PC-3 (cell line): ENCODE measurements at regions of chr2 and their contacts with region 1.

Region 1: GRCh38 chr2:201754717-201755415 is 25.9 kb downstream of the ALS2 start:
- DNase-seq: peak; percentile 72
- ATAC-seq: peak; percentile 96
- H3K4me3 ChIP-seq: no peak overlapping the region
- H3K27ac ChIP-seq: no peak overlapping the region
- H3K4me1 ChIP-seq: peaks cover 10% of the 10 kb centered on the region
- H3K27me3 ChIP-seq: no peaks in the 10 kb centered on the region
- CTCF ChIP-seq: no peak

Region 2: DNA sequence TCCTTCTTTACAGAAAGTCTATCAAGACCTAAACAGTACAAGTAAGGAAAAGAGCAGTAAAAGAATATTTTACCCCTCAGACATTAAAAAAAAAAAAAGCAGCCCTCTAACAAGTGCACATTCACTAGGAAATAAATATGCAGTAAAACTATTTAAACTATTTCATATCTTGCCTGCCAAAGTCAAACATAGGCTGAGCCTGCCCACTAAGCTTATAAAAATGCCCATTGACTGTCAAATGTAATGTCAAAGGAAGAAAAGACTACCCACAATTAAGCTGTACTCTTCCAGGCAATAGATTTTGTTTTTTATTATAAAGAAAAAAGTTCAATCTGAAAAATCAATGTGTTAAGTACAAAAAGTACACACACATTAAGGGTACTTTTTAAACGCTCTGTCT is 14.1 kb after region 1 on chr2:
- CTCF ChIA-PET with region 1: interaction called, 5 read pairs
- POLR2A ChIA-PET with region 1: no interaction called
- intact Hi-C with region 1: loop called (anchors 2 kb)
- DNase-seq: peak; percentile 36
- ATAC-seq: peak; percentile 83
- H3K4me3 ChIP-seq: no peak overlapping the region
- H3K27ac ChIP-seq: no peak overlapping the region
- H3K4me1 ChIP-seq: peaks cover 25% of the 10 kb centered on the region
- H3K27me3 ChIP-seq: no peaks in the 10 kb centered on the region
- CTCF ChIP-seq: no peak

Region 3: DNA sequence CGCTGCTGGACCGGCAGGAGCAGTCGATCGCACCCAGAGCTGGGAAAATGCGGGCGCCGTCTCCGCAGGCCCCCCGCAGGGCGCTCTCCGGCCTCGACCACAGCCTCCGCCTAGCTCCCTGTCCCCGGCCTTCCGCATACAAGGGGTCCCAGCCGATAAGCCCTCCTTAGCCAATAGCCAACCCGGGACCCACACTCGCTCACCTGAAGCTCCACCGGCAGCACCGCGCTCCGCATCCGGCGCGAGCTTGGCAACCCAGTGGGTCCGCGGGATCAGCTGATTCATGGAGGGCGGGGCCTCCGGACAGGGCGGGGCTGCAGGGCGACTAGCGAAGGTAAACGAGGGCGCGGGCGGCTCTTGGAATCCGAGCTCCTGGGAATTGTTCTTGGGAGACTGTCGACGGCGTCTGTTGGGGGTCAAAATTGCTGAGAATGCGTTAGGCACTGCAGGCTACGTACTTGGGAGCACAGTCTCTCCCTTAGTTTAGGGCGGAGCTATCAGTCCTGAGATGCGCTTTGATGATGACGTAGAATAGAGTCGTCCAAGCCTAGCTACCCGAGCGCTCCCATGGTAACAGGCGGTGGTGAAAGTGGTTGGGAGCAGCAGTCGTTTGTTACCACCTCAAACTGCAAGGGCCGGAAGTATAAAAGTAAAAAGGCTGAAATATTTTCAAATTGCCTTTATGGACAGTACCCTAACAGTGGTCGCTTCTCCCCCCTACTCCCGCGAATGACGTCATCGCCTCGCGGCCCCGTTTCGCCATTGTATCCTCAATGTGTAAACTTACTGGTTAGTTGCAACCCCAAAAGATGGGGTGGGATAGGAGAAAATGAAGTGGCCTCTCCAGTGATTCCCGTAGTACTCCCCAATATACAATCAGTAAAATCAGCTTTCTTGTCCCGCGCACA is 26.1 kb after region 1 on chr2 and contains the start of gene ALS2:
- CTCF ChIA-PET with region 1: no interaction called
- POLR2A ChIA-PET with region 1: no interaction called
- intact Hi-C with region 1: no loop called
- DNase-seq: peak; percentile 97
- ATAC-seq: peak; percentile 87
- H3K4me3 ChIP-seq: peak within 1 kb of the TSS; percentile 97
- H3K27ac ChIP-seq: peak within 1 kb of the TSS; percentile 59
- H3K4me1 ChIP-seq: peaks cover 44% of the 10 kb centered on the region
- H3K27me3 ChIP-seq: no peaks in the 10 kb centered on the region
- CTCF ChIP-seq: no peak
- total RNA-seq, gene ALS2: 20.4 and 23.8 TPM in 2 replicates

Region 4: DNA sequence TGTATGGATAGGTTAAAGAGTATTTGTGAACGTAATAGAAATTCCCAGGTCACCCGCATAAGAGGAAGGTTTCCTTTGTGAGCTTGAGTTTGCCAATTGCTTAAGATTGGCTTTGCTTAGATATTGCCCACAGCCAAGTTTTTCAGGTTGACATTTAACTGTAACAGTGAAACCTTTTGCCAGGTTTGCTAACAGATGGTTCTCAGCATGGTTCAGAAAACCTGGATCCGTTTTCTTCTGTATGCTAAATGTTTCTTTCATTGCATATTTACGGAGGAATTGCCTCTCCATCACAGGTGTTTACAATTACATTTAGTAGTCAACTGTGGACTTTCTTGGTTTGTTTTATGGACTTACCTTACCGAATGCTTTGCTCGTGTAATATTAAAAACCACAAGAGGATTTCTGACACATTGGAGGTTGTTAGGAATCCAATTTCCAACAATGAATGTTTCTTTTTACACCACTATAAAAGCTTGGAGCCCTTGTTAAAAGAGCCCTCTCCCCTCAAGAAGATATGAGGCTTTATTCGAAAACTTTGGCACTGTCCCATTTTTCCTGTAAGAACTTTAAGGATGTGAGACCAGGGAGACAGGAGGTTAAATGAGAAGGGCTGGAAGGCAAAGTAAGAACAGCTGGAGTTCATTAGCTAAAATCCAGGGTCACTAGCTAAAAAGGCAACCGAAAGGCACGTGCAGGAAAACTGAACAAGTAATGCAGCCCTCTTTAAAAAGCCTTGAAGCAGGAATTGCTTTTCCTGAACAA is 59.3 kb after region 1 on chr2:
- CTCF ChIA-PET with region 1: interaction called, 10 read pairs
- POLR2A ChIA-PET with region 1: no interaction called
- intact Hi-C with region 1: no loop called
- DNase-seq: no peak
- ATAC-seq: no peak
- H3K4me3 ChIP-seq: no peak overlapping the region
- H3K27ac ChIP-seq: no peak overlapping the region
- H3K4me1 ChIP-seq: no peaks in the 10 kb centered on the region
- H3K27me3 ChIP-seq: no peaks in the 10 kb centered on the region
- CTCF ChIP-seq: no peak

Region 5: GRCh38 chr2:201880993-201881611 is 126.2 kb after region 1 on chr2:
- CTCF ChIA-PET with region 1: no interaction called
- POLR2A ChIA-PET with region 1: no interaction called
- intact Hi-C with region 1: no loop called
- DNase-seq: peak; percentile 28
- ATAC-seq: peak; percentile 50; the same call in 1 of the 2 replicates
- H3K4me3 ChIP-seq: no peak overlapping the region
- H3K27ac ChIP-seq: no peak overlapping the region
- H3K4me1 ChIP-seq: peaks cover 20% of the 10 kb centered on the region
- H3K27me3 ChIP-seq: 0 out of 2 replicates have a peak, but pooled peaks cover 4% of the 10 kb centered on the region
- CTCF ChIP-seq: no peak